Posterior vena cava (tissue), 2 donors: ENCODE measurements at regions of chr7 and their contacts with region 1.

Region 1: GRCh38 chr7:39580149-39580874 is 14.1 kb downstream of the YAE1 start:
- DNase-seq: no peak

Region 2: GRCh38 chr7:39746103-39746819 is 165.9 kb after region 1 on chr7:
- intact Hi-C with region 1: loop called (anchors 2 to 5 kb)
- DNase-seq: peak; percentile 91

Region 3: DNA sequence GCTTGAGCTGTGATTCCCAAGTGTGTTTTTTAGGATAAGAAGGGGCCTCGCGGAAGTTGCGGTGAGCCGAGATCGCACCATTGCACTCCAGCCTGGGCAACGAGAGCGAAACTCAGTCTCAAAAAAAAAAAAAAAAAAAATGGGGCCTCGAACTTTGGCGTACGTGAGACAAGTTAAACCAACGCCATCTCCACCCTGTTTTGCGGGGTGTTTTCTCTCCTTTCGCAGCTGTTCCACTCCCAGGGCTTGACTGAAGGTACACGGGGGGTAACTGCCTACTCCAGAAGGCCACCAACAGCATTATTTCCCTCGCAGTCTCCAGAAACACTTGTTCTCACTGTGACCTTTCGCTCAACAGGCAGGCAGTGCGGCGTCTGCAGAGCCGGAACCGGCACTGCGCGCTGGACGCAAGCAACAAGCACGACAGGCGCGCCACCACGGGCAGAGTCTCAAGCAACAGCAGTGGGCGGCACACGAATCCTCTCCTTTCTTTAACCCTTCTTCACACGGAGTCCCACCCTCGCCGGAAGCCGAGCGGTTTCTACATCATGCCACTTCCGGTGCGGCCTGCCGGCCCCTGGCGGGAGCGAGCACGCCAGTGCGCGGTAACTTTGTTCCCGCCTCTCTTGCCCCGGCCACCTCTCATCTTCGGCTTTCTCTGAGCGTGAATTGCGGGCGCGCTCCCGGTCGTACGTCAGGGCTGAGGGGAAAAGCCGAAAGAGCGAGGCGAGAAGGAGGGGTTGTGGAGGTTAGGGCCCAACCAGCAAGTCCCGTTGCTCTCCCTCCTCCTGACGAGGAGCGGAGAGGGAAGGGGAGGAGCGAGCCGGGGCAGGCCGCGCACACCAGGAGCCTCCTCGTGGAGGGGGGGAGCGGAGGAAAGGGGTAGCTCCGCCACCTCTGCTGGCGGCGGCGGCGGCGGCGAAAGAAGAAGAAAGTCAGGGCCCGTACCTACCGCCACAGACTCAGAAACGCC is 368.9 kb after region 1 on chr7:
- intact Hi-C with region 1: loop called in 1 of 2 experiments (anchors 5 kb)
- DNase-seq: peak; percentile 100